ENCODE measurements at regions of chr19 and their contacts with region 1.

Region 1: DNA sequence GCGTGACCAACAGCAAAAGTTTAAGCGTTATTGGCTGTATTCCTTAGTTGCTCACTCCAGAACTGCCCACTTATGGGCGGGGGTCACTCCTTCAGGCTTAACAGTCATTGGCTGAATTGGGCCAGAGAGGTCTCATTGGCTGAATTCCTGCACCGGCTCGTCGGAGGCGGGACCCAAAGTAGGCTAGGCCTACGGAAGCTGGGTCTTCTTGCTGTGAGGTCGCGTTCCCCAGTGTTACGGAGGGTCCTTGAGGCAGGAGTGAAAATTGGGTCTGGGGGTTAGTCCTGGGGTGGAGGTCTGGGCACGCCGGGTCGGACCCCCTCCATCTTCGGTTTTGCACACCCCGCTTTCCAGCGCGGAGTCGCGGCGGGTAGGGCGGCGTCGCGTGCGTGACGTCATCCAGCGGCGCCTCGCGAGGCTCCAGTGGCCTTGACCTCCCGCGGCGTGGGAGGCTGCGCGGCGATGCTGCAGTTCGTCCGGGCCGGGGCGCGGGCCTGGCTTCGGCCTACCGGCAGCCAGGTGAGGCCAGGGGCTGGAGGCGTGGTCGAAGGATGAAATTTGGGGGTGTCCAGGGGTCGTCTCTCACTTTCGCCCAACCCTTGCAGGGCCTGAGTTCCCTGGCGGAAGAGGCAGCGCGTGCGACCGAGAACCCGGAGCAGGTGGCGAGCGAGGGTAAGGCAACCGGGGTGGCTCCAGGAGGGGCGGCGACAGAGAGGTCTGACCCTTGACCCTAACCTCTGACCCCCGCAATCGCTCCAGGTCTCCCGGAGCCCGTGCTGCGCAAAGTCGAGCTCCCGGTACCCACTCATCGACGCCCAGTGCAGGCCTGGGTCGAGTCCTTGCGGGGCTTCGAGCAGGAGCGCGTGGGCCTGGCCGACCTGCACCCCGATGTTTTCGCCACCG is at the start of gene MRPL4:
- DNase-seq: peak; percentile 99
- ATAC-seq: peak; percentile 97
- H3K4me3 ChIP-seq: peak within 1 kb of the TSS; percentile 64
- H3K27ac ChIP-seq: peak within 1 kb of the TSS; percentile 72
- H3K4me1 ChIP-seq: 0 out of 2 replicates have a peak, but pooled peaks cover 2% of the 10 kb centered on the region
- H3K27me3 ChIP-seq: no peaks in the 10 kb centered on the region
- CTCF ChIP-seq: no peak
- POLR2A ChIP-seq: no peak
- RAD21 ChIP-seq: no peak
- total RNA-seq, gene MRPL4: 32.8 and 36.4 TPM in 2 replicates

Region 2: GRCh38 chr19:10027158-10027693 is 224.8 kb before region 1 on chr19:
- CTCF ChIA-PET with region 1: no interaction called
- POLR2A ChIA-PET with region 1: no interaction called
- dilution Hi-C with region 1: no loop called
- in situ Hi-C with region 1: no loop called
- intact Hi-C with region 1: loop called (anchors 10 kb)
- DNase-seq: no peak
- ATAC-seq: no peak
- H3K4me3 ChIP-seq: no peak overlapping the region
- H3K27ac ChIP-seq: no peak overlapping the region
- H3K4me1 ChIP-seq: 0 out of 2 replicates have a peak, but pooled peaks cover 2% of the 10 kb centered on the region
- H3K27me3 ChIP-seq: peaks cover 22% of the 10 kb centered on the region
- CTCF ChIP-seq: no peak
- POLR2A ChIP-seq: no peak
- RAD21 ChIP-seq: no peak

Region 3: GRCh38 chr19:10120538-10121189 is 131.4 kb before region 1 on chr19:
- CTCF ChIA-PET with region 1: interaction called, 4 read pairs
- POLR2A ChIA-PET with region 1: interaction called, 3 read pairs
- dilution Hi-C with region 1: no loop called
- in situ Hi-C with region 1: no loop called
- intact Hi-C with region 1: loop called (anchors 2 kb)
- DNase-seq: peak; percentile 92
- ATAC-seq: peak; percentile 55
- H3K4me3 ChIP-seq: no peak overlapping the region; the same call in 1 of the 2 replicates
- H3K27ac ChIP-seq: peak overlapping the region; percentile 97
- H3K4me1 ChIP-seq: peaks cover 9% of the 10 kb centered on the region
- H3K27me3 ChIP-seq: no peaks in the 10 kb centered on the region
- CTCF ChIP-seq: no peak
- POLR2A ChIP-seq: no peak
- RAD21 ChIP-seq: no peak

Region 4: GRCh38 chr19:10194500-10195289 is 57.3 kb before region 1 on chr19 and contains the start of gene DNMT1:
- CTCF ChIA-PET with region 1: interaction called, 4 read pairs
- POLR2A ChIA-PET with region 1: interaction called, 3 read pairs
- dilution Hi-C with region 1: no loop called
- in situ Hi-C with region 1: no loop called
- intact Hi-C with region 1: loop called (anchors 2 kb)
- DNase-seq: peak; percentile 95
- ATAC-seq: peak; percentile 96
- H3K4me3 ChIP-seq: peak within 1 kb of the TSS; percentile 81
- H3K27ac ChIP-seq: peak within 1 kb of the TSS; percentile 89
- H3K4me1 ChIP-seq: peaks cover 8% of the 10 kb centered on the region
- H3K27me3 ChIP-seq: no peaks in the 10 kb centered on the region
- CTCF ChIP-seq: no peak
- POLR2A ChIP-seq: peak; percentile 80; the same call in 1 of the 2 replicates
- RAD21 ChIP-seq: no peak
- total RNA-seq, gene DNMT1: 26.2 and 40.3 TPM in 2 replicates

Region 5: DNA sequence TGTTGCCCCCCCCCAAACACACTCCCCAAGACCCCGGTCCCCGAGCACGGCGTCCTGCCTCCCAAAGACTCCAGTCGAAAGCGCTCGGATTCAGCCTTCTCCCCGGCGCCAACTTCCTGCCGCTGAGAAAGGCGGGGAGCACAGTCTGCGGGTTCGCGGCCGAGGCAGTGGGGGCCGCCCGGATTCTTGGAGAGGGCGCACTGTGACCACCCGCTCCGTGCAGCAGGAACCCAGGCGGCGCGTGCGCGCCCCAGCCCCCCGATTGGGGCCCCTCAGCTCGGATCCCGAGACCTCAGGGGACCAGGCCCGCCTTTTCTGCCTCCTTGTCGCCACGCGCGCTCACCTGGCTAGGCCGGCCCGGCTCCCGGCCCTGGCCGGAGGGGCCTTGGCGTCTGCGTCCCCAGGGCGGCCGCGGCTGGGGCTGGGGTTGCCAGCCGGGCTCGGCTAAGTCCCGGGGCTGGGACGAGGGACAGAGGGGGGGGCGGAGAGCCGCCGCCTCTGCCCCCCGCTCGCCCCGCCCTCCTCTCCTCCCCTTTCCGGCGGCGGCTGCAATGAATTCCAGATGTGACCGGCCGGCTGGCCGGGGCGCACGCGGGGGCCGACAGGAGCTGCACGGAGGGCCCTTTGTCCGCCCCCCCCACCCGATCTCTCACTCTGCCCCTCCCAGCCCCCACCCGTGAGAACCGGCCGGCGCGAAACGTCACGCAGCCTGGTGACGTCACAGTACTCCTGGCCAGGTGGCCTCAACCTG is 21.0 kb before region 1 on chr19 and contains the start of gene S1PR2:
- CTCF ChIA-PET with region 1: interaction called, 5 read pairs
- POLR2A ChIA-PET with region 1: interaction called, 5 read pairs
- dilution Hi-C with region 1: no loop called
- in situ Hi-C with region 1: no loop called
- intact Hi-C with region 1: loop called (anchors 1 kb)
- DNase-seq: peak; percentile 75
- ATAC-seq: peak; percentile 69
- H3K4me3 ChIP-seq: peak within 1 kb of the TSS; percentile 87
- H3K27ac ChIP-seq: peak within 1 kb of the TSS; percentile 89
- H3K4me1 ChIP-seq: peaks cover 26% of the 10 kb centered on the region
- H3K27me3 ChIP-seq: no peaks in the 10 kb centered on the region
- CTCF ChIP-seq: no peak
- POLR2A ChIP-seq: peak; percentile 86
- RAD21 ChIP-seq: no peak; the same call in 1 of the 2 replicates
- total RNA-seq, gene S1PR2: 14.0 and 16.7 TPM in 2 replicates